Mucosa of descending colon (tissue), 3 donors: ENCODE measurements at regions of chr1 and their contacts with region 1.

Region 1: GRCh38 chr1:163315773-163316374 is 5.9 kb upstream of the NUF2 start:
- DNase-seq: peak in 1 of 3 donors; percentile 54
- ATAC-seq: no peak
- H3K4me3 ChIP-seq: no peak overlapping the region
- H3K4me1 ChIP-seq: peaks cover 5% of the 10 kb centered on the region
- CTCF ChIP-seq: peak; percentile 54

Region 2: GRCh38 chr1:162854245-162854882 is 461.5 kb before region 1 on chr1:
- intact Hi-C with region 1: loop called (anchors 10 kb)
- DNase-seq: peak in 2 of 3 donors; percentile 52 to 84
- ATAC-seq: peak; percentile 85
- H3K4me3 ChIP-seq: no peak overlapping the region
- H3K4me1 ChIP-seq: no peaks in the 10 kb centered on the region
- CTCF ChIP-seq: peak; percentile 35

Region 3: GRCh38 chr1:162878000-162878596 is 437.8 kb before region 1 on chr1:
- intact Hi-C with region 1: loop called in 1 of 2 experiments (anchors 5 kb)
- DNase-seq: peak in 2 of 3 donors; percentile 40 to 65
- ATAC-seq: peak; percentile 56
- H3K4me3 ChIP-seq: no peak overlapping the region
- H3K4me1 ChIP-seq: no peaks in the 10 kb centered on the region
- CTCF ChIP-seq: no peak

Region 4: DNA sequence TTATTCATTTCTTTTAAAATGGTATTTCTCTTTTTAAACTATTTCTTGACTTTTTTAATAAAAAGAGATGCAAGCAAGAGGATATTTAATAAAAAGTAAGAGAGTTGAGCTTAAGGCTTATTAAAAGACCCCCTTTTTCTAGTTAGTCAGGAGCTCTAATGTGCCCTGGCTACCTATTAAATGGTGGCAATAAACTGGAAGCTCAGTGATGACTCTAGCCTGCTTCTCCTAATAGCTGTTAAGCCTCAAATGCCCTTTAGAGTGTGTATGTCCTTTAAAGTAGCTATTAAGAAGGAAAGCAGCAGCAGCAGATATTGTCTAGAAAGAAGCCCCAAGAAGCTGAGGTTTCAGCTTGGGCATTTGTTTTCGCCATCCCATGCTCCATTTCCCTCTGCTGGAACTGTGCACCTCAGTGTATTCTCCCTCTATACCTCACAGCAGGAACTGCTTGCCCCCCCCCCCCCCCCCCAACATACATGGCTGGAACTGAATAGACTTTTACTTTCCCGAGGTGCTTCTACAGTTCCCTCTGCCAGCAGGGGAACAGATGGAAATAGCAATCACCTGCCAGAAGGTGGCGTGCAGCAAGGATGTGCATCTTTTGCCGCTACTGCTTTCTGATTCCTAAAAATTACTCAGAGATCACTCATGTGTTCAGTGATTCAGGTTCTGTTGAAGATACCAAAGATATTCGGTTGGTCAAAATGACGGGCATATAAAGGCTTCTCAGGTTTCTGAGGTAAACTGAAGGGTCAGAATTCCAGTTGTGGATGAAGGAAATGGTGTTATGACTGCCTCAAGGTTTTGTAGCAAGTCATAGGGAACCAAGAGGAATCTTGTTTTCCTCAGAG is 244.2 kb before region 1 on chr1:
- intact Hi-C with region 1: loop called in 1 of 2 experiments (anchors 10 kb)
- DNase-seq: peak in 2 of 3 donors; percentile 33 to 60
- ATAC-seq: peak; percentile 43
- H3K4me3 ChIP-seq: no peak overlapping the region
- H3K4me1 ChIP-seq: no peaks in the 10 kb centered on the region
- CTCF ChIP-seq: peak; percentile 20